Psoas muscle (tissue), 8 donors: ENCODE measurements at regions of chr16 and their contacts with region 1.

Region 1: GRCh38 chr16:660459-661183 is 7.3 kb upstream of the RHOT2 start:
- DNase-seq: peak; percentile 93 to 96
- ATAC-seq: peak; percentile 85 to 93 (median 88)
- H3K4me3 ChIP-seq: peak overlapping the region; percentile 46
- H3K27ac ChIP-seq: peak overlapping the region; percentile 68
- H3K4me1 ChIP-seq: peaks cover 11% of the 10 kb centered on the region
- H3K27me3 ChIP-seq: no peaks in the 10 kb centered on the region
- CTCF ChIP-seq: peak; percentile 47

Region 2: GRCh38 chr16:583815-584591 is 76.6 kb before region 1 on chr16:
- intact Hi-C with region 1: loop called in 1 of 2 experiments (anchors 2 kb)
- DNase-seq: no peak
- ATAC-seq: no peak
- H3K4me3 ChIP-seq: no peak overlapping the region
- H3K27ac ChIP-seq: no peak overlapping the region
- H3K4me1 ChIP-seq: peaks cover 33% of the 10 kb centered on the region
- H3K27me3 ChIP-seq: no peaks in the 10 kb centered on the region
- CTCF ChIP-seq: no peak

Region 3: DNA sequence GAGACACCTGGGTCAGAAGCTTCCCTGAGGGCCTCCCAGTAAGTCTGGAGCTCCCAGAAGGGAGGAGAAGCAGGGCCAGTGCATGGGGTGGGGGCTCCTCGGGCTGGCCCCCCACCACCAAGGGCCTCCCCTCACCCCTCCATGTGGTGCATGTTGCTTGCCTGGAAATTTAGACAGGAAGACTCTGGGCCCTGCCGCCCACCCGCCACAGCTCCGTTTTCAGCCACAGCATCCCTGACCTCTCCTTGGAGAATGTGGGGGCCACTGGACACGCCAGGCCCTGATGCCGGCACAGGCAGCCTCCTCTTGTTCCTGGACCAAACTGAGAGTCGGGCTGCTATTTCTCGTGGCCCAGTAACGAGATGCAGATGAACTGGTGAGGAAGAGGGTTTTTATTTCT is 21.8 kb before region 1 on chr16:
- intact Hi-C with region 1: loop called in 1 of 2 experiments (anchors 1 kb)
- DNase-seq: no peak
- ATAC-seq: no peak
- H3K4me3 ChIP-seq: no peak overlapping the region
- H3K27ac ChIP-seq: peak overlapping the region; percentile 27
- H3K4me1 ChIP-seq: peaks cover 38% of the 10 kb centered on the region
- H3K27me3 ChIP-seq: no peaks in the 10 kb centered on the region
- CTCF ChIP-seq: no peak